Activated T-helper 2 cell treated with anti-CD3 and anti-CD28 coated beads, Interferon-gamma antibody, Interleukin-2, Interleukin-4, amounts not matched to agents 10 μg/mL and 5 μg/mL and 100 μg/mL, durations not matched to agents 14 hours and 24 hours and 36 hours (primary cell): ENCODE measurements at regions of chr7 and their contacts with region 1.

Region 1: GRCh38 chr7:25125137-25125946 is at the start of gene CYCS:
- DNase-seq: peak; percentile 99
- H3K4me3 Mint-ChIP-seq: peak within 1 kb of the TSS; percentile 94
- H3K27ac Mint-ChIP-seq: peak within 1 kb of the TSS; percentile 97
- H3K4me1 Mint-ChIP-seq: peaks cover 24% of the 10 kb centered on the region
- H3K27me3 Mint-ChIP-seq: no peaks in the 10 kb centered on the region
- total RNA-seq, gene CYCS: 235 and 251 TPM in 2 replicates

Region 2: DNA sequence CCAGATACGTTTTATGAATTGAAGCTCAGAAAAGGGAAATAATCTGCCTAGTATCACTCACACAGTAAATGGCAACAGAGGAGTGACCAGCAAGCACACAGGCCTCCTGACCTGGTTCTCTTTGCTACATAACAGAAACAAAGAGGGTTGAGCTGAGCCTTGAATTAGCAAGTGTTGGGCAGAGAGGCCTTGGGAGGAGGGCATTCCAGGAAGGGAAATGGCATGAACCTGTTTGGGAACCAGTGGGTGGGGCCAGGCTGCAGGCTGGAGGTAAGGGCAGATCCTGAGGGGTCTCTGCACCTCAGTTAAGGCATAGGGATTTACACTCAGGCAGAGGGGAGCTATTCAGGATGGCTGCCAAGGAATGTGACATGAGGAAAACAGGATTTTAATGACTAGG is 24.5 kb after region 1 on chr7:
- intact Hi-C with region 1: loop called (anchors 2 kb)
- DNase-seq: no peak
- H3K4me3 Mint-ChIP-seq: no peak overlapping the region
- H3K27ac Mint-ChIP-seq: peak overlapping the region; percentile 91
- H3K4me1 Mint-ChIP-seq: peaks cover 18% of the 10 kb centered on the region
- H3K27me3 Mint-ChIP-seq: no peaks in the 10 kb centered on the region

Region 3: DNA sequence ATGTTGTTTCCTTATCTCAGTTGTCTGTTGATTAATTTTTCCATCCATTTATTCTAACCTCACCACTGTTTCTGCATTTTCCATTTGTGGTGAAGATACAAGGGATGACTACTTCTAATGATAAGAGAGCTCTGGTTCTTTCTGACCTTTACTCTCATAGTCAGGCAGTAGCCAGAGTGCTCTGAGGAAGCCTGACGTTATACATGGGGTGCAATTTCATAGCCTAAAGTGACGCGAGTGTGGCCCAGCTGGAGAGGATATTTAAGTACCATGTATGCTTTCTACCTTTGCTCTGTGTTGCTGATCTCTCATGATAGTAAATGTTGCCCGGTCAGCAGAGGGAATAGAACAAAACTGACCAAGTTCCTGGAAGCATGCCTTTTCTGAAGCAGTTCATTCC is 33.6 kb after region 1 on chr7:
- intact Hi-C with region 1: loop called (anchors 2 kb)
- DNase-seq: no peak
- H3K4me3 Mint-ChIP-seq: no peak overlapping the region
- H3K27ac Mint-ChIP-seq: no peak overlapping the region
- H3K4me1 Mint-ChIP-seq: peaks cover 5% of the 10 kb centered on the region
- H3K27me3 Mint-ChIP-seq: no peaks in the 10 kb centered on the region

Region 4: DNA sequence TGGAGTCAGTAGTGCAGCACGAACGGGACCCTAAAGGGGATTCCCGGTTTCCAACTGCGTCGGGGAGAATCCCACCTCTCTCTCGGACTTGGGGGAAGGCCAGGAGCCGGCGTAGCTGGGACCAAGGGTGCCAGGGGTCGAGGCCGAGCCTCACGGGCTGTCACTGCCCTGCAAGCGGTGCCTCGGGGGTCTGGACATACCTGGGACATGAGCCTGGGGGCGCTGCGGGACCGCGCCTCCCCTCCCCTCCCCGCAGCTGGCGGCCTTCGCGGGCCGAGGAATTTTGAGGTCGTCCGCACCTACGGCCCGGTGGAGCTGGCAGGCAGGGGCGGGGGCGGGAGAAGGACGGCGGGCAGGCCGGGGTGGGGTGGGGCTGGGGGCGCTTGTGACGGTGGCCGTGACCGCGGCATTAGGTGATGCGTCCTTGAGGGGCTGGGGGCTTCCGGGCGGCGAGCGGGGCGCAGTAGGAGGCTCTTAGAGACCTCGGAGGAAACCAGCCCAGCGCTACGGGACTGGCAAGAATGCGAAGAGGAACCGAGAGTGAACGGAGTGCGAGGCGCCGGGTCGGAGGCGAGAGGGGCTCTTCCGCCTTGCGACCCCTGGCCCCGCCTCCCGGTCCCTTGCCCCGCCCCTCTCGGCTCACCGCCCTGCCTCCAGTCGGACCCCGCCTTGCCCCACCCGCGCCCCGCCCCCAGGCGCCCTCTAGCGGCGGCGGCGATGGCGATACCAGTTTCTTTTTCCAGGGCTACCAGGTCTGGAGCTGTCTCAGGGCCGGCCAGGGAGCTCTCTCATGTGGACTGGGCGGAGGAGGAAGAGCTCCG is 54.6 kb after region 1 on chr7:
- intact Hi-C with region 1: loop called (anchors 2 kb)
- DNase-seq: peak; percentile 90
- H3K4me3 Mint-ChIP-seq: peak overlapping the region; percentile 84
- H3K27ac Mint-ChIP-seq: peak overlapping the region; percentile 83
- H3K4me1 Mint-ChIP-seq: peaks cover 13% of the 10 kb centered on the region
- H3K27me3 Mint-ChIP-seq: peaks cover 12% of the 10 kb centered on the region